KBM-7 (cell line): ENCODE measurements at regions of chr15 and their contacts with region 1.

Region 1: GRCh38 chr15:52780172-52780980 is 9.8 kb downstream of the ONECUT1 start:
- DNase-seq: peak; percentile 88

Region 2: GRCh38 chr15:53203454-53203853 is 423.1 kb after region 1 on chr15:
- in situ Hi-C with region 1: loop called (anchors 25 kb)
- DNase-seq: peak; percentile 42